Gastrocnemius medialis (tissue), 4 donors: ENCODE measurements at regions of chr11 and their contacts with region 1.

Region 1: GRCh38 chr11:26993965-26994457 is at the start of gene FIBIN:
- DNase-seq: peak; percentile 22 to 25
- ATAC-seq: peak; percentile 64 to 65
- H3K4me3 ChIP-seq: peak within 1 kb of the TSS; percentile 54 to 59 (median 56)
- H3K27ac ChIP-seq: peak within 1 kb of the TSS; percentile 63 to 72 (median 71)
- H3K4me1 ChIP-seq: peaks cover 15 to 18% of the 10 kb centered on the region in 2 donors
- H3K27me3 ChIP-seq: no peaks in the 10 kb centered on the region
- CTCF ChIP-seq: no peak
- POLR2A ChIP-seq: peak in 1 of 2 donors; percentile 58
- total RNA-seq, gene FIBIN: 10.7 to 23.6 (median 21.3) TPM

Region 2: GRCh38 chr11:26753723-26754504 is 240.1 kb before region 1 on chr11:
- in situ Hi-C with region 1: no loop called
- intact Hi-C with region 1: loop called (anchors 5 kb)
- DNase-seq: peak; percentile 12 to 30
- ATAC-seq: peak; percentile 85 to 86
- H3K4me3 ChIP-seq: no peak overlapping the region
- H3K27ac ChIP-seq: no peak overlapping the region
- H3K4me1 ChIP-seq: no peaks in the 10 kb centered on the region
- H3K27me3 ChIP-seq: no peaks in the 10 kb centered on the region
- CTCF ChIP-seq: peak; percentile 55 to 72 (median 69)
- POLR2A ChIP-seq: no peak

Region 3: DNA sequence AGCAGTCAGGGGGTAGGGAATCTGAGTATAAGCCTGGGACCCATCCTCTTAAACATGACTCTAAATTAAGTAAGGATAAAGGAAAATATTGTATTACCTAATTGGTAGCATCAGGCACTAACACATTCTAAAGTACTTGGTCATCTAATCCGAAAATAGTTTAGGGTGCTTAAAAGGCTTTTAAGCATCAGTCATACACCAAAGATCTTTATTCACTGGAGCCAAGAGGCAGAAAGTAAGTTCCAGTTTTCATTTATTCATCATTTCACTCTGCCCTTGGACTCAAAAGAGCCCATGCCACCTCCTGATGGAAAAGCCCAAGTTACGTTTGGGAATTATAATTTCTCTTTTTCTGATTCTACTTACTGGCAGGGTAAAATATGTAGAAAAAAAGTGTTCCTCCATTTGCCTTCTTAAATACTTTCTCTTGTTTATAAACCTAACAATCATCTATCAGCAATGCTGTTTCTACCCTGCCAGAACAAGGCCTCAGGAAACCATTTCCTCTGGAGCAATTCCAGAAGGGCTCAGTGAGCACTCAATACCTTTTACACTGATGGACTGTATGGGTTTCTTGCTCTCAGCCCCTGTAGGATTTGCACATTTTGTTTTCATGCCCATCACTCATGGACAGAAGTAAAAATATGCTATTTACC is 152.1 kb before region 1 on chr11:
- in situ Hi-C with region 1: no loop called
- intact Hi-C with region 1: loop called (anchors 5 kb)
- DNase-seq: no peak
- ATAC-seq: peak; percentile 19 to 35
- H3K4me3 ChIP-seq: no peak overlapping the region
- H3K27ac ChIP-seq: peak overlapping the region; percentile 56 to 80 (median 72)
- H3K4me1 ChIP-seq: peaks cover 29 to 31% of the 10 kb centered on the region in 2 donors
- H3K27me3 ChIP-seq: no peaks in the 10 kb centered on the region
- CTCF ChIP-seq: no peak
- POLR2A ChIP-seq: no peak

Region 4: DNA sequence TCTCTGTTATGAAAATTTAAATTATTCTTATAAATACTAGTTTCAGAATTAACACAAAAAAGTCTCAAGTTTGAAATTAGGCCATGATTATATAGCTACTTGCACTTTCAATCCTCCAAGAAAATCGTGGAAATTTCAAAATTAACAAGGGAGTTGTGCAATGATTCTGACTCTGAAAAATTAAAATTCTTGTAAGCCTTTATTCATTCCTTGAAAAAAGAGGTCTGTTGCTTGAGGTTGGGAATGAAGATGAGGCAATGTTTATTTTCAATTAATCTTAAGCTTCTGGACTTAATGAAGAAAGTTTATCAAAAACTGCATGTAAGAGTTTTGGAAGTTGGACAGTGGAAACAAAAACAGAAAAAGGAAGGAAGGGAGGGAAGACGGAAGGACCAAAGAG is 128.3 kb before region 1 on chr11:
- in situ Hi-C with region 1: no loop called
- intact Hi-C with region 1: loop called (anchors 1 kb)
- DNase-seq: no peak
- ATAC-seq: no peak
- H3K4me3 ChIP-seq: no peak overlapping the region
- H3K27ac ChIP-seq: no peak overlapping the region
- H3K4me1 ChIP-seq: peaks cover 0 to 5% of the 10 kb centered on the region in 2 donors
- H3K27me3 ChIP-seq: no peaks in the 10 kb centered on the region
- CTCF ChIP-seq: no peak
- POLR2A ChIP-seq: no peak

Region 5: DNA sequence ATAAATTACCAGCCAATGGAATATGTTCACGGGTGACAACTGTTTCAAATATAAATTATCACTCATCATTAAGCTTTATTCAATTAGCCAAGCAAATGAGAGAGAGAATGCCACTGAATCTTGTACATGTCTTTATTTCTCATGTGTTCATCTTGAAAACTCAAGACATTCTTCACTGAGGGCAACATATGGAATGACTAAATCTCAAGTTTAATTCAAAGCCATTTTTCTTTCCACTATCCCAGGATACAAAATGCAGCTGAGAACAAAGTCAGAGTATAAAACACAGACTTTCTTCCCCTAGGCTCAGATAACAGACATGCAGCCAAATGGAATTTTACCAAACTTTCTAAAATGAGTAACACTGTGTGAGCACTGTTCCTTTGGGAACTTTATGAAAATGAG is 34.6 kb after region 1 on chr11:
- in situ Hi-C with region 1: no loop called
- intact Hi-C with region 1: no loop called
- DNase-seq: no peak
- ATAC-seq: peak in 1 of 2 donors; percentile 58
- H3K4me3 ChIP-seq: no peak overlapping the region
- H3K27ac ChIP-seq: no peak overlapping the region
- H3K4me1 ChIP-seq: no peaks in the 10 kb centered on the region
- H3K27me3 ChIP-seq: no peaks in the 10 kb centered on the region
- CTCF ChIP-seq: no peak
- POLR2A ChIP-seq: no peak

Region 6: DNA sequence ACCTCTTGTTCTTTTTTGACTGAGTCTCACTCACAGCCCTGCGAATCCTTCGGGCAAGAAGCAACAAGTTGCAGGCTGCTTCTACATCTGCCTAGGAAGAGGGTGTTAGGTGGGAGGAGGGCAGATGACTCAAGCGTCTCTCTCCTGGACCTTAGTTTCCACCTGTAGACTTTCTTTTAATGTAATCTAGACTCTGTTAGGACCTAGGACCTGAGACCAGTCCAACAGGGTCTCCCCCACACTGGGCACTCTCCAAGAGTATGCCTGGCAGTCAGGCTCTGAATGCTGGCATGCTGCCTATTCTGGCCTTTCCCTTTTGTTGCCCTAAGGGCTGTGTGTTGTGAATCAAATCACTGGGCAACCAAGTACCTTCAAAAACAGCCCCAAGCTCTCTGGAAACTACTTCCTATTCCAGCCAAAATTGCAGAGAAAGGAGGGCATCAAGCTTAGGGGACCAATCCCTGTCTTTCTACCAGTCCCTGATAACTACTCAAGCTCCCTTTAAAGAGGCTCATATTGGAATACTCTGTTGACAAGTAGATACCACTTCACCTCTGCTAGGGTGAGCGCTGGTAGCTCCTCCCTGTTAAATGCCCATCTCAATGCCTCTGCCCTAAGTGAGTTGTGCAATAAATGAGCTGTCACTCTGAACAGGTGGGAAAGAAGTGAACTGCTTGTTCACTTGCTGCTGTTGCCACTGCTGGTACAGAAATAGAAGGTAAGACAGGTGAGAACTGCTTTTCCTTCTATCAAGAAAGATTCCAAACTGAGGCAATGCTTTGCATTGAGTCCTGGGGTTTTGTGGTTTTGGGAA is 46.5 kb after region 1 on chr11 and contains the start of gene BBOX1:
- in situ Hi-C with region 1: no loop called
- intact Hi-C with region 1: loop called (anchors 5 kb)
- DNase-seq: no peak
- ATAC-seq: peak in 1 of 2 donors; percentile 51
- H3K4me3 ChIP-seq: no peak within 1 kb of the TSS
- H3K27ac ChIP-seq: no peak within 1 kb of the TSS
- H3K4me1 ChIP-seq: peaks cover 0 to 9% of the 10 kb centered on the region in 2 donors
- H3K27me3 ChIP-seq: no peaks in the 10 kb centered on the region
- CTCF ChIP-seq: no peak
- POLR2A ChIP-seq: no peak
- total RNA-seq, gene BBOX1: 0.25 to 10.2 (median 0.65) TPM in 3 of 4 donors, not detected in the other